Right ventricle myocardium inferior (tissue), 1 donor: ENCODE measurements at regions of chr19 and their contacts with region 1.

Region 1: DNA sequence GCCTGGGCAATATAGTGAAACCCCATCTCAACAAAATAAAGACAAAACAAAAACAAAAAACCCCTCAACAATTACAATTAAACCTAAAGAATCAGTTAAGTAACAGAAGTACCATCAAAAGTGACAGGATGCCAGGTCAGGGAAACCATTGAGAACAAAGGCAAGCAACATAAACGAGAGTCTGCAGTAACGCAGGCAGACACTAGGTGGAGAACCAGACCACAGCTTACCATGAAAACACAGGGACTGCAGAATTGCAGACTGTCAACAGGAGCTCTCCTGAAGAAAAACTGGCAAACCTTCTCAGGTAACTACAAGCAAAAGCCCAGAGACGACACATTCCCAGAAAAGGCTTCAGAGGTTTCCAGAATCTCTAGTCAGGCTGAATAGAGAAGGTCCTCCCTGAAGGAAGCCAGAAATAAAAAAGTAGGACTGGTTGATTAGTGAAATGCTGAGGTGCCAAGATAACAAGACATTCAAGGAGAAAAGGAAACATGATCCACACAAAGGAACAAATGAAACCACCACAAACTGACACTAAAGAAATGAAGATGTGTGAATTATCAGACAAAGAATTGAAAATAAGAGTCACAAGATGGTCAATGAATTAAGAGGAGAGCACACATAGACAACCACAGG is 2.2 kb upstream of the ZNF665 start:
- DNase-seq: no peak
- ATAC-seq: peak; percentile 46

Region 2: GRCh38 chr19:53055117-53055516 is 140.3 kb before region 1 on chr19:
- intact Hi-C with region 1: no loop called
- DNase-seq: no peak
- ATAC-seq: no peak

Region 3: GRCh38 chr19:53076977-53077376 is 118.4 kb before region 1 on chr19:
- intact Hi-C with region 1: loop called (anchors 5 kb)
- DNase-seq: peak; percentile 67
- ATAC-seq: peak; percentile 76

Region 4: GRCh38 chr19:53254411-53255341 is 59.3 kb after region 1 on chr19 and contains the start of gene ZNF677:
- intact Hi-C with region 1: loop called (anchors 1 kb)
- DNase-seq: peak; percentile 95
- ATAC-seq: peak; percentile 100
- total RNA-seq, gene ZNF677: 20.1 TPM

Region 5: DNA sequence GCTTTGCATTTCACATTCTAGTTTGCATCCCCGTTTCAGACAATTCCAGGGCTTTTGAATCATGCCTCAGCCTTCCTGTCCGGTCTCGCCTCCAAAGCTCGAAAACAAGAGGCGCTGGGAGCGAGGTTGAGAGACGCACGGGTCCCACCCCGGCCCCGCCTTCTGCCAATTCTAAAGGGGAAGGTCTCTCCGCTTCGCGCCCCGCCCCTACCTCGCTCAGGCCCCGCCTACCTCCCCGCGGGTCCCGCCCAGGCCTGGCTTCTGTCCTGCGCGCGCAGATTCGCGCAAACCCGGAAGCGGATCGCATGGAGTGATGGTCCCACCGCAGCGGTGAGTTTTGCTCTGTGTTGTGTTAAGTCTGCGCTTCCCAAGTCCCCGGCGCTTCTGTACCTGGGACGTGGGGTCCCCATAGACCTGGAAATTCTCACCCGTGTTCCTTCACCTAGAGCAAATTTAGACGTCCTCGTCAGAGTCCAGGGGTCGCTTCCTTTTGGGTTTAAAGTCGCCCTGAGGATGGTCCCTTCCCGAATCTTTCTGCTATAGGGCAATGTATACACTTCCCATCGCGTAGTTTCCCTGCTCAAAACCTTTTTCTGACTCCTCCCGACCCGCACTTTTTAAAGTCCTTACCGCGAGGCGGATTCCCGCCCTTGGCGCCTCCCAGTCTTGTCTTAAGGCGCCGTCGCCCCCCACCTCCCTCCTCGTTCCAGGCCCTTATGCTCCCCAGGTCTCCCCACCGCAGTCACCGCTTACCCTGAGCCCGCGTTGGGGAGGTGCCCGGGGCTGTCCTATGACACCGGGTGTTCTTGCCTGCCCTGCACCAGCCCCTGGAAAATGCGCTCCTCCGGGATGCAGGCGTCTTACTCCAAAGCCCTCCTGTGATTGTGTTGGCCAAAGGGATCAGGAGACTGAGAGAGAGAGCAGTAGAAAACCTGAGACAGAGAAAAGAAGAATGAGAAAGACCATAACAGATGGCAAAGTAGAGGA is 138.4 kb after region 1 on chr19 and contains the start of gene ZNF845:
- intact Hi-C with region 1: loop called (anchors 10 kb)
- DNase-seq: peak; percentile 96
- ATAC-seq: peak; percentile 100
- total RNA-seq, gene ZNF845: 3.7 TPM

Region 6: GRCh38 chr19:53365134-53365898 is 169.9 kb after region 1 on chr19 and contains the start of gene ZNF525:
- intact Hi-C with region 1: loop called (anchors 5 kb)
- DNase-seq: peak; percentile 94
- ATAC-seq: peak; percentile 100
- total RNA-seq, gene ZNF525: 4.8 TPM

Region 7: DNA sequence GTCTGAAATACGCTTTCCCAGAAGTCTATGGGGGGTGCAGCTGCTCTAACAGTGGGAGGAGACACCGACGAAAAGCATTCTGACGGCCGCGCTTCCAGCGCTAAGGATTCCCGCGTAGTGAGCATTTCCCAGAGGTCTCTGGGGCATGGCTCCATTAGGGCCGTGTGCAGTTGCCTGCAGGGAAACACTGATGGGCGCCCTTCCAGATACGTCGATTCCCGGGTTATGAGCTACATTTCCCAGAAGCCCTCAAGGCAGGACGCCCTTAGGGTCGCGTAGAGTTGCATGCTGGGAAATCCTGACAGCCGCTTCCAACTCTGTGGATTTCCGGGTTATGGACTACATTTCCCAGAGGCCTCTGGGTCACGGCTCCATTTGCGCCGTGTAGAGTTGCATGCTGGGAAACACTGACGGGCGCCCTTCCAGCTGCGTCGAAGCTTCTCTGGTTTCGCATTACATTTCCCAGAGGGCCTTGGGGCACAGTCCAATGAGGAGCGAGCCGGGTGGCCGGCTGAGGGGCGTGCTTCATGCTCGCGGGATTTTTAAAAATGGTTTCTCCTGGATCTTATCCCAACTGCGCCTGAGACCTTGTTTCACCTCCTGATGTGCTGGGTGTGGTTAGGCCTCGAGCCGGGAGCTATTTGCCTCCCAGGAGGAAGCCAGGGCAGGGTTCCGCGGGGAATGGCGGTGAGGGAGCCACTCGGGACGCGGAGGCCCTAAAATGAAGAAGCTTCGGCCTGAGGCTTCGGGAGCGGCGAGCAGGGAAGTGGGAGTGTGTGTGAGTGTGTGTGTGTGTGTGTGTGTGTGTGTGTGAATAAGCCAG is 325.4 kb after region 1 on chr19:
- intact Hi-C with region 1: loop called (anchors 5 kb)
- DNase-seq: peak; percentile 96
- ATAC-seq: peak; percentile 100